Aorta (tissue), 5 donors: ENCODE measurements at regions of chr5 and their contacts with region 1.

Region 1: DNA sequence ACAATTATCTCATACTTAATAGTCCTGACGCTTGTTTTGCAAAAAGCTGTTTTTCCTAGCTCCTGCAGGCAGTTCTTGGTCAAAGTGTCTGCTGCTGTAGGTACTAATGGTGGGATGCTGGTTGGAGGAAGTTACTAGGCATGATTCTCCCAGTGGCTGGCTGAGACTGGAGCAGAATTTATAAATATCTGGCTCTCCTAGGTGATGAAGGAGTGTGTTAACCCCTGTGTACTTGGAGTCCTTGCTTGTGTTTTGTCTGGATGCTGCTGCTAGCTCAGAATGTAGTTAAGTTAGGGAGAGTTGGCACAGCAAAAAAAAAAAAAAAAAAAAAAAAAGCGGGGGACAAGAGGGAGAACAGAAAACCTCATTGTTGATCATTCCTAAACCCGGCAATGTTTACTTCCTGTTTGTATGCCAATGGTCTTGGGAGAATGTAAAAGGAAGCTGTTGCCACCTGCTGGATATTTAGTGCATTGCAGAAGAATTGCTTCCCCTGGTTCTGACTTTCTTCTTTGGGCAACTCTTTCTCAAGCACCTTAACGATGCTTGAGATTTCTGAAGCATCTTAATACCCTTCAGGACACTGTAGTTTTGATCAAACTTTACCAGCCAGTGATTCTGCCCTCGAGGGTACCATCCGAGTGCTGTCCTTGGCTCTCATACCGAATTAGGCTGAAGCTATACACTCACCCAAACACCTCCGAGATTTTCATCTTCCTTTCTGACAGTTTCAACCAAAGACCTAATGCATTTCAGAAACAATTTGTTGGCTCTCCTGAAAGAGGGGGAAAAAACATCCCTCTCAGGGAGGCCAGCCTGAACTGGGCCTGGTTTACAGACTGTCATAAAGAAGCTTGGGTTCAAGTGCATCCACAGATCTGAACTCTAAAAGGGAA is 71.7 kb upstream of the WWC1 start:
- DNase-seq: no peak
- ATAC-seq: peak; percentile 82
- H3K4me3 ChIP-seq: no peak overlapping the region
- H3K27ac ChIP-seq: no peak overlapping the region
- H3K4me1 ChIP-seq: no peaks in the 10 kb centered on the region
- H3K27me3 ChIP-seq: no peaks in the 10 kb centered on the region

Region 2: DNA sequence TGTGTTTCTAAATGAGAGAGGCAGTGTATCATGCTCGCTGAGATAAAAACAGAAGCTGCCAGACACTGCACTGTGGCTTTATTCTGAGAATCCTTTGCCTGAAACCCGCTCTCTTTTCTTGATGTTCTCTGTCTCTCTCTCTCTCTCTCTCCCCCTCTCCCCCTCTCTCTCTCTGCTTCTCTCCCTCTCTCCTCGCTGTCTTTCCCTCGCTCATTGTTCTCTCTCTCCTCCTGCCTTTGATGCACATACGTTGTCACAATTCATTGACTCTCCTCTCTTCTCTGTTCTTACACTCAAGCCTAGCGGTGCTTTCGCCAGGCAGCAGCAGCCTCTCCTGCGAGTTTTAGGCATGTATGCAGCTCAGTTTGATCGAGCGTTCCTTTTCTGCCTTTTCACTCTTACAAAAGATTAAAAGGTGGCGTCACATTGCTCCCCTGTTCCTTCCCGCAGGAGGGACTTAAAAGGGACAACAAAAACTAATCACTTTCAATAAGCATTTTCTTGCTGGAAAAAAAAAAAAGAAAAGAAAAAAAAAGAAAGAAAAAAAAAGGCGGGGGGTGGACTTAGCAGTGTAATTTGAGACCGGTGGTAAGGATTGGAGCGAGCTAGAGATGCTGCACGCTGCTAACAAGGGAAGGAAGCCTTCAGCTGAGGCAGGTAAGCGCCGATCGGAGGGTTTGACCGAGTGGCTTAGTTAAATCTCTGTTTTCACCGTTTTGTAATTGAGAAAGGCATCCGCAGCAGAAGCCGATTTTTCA is 646.2 kb before region 1 on chr5:
- intact Hi-C with region 1: loop called in 1 of 2 experiments (anchors 10 kb)
- DNase-seq: no peak
- ATAC-seq: peak; percentile 36
- H3K4me3 ChIP-seq: peak overlapping the region; percentile 34 to 41
- H3K27ac ChIP-seq: no peak overlapping the region
- H3K4me1 ChIP-seq: no peaks in the 10 kb centered on the region
- H3K27me3 ChIP-seq: peaks cover 0 to 2% of the 10 kb centered on the region in 2 donors

Region 3: DNA sequence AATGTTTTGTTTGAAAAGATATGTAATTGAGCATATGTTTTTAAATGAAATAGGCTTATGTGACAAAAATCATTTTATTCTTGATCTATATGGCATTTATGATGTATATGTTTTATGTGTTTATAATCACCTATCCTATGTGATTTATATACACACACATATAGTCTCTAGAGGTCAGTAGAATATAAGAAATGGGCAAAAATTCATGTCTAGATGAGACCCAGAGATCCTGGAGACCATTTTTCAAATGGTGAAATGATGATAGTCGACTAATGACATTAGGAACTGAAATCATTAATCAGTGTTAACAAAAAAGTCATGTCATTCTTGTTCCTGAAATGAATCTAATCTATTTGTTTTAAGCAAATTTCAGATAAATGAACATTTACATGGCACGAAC is 637.5 kb before region 1 on chr5:
- intact Hi-C with region 1: loop called (anchors 5 to 10 kb)
- DNase-seq: no peak
- ATAC-seq: no peak
- H3K4me3 ChIP-seq: no peak overlapping the region
- H3K27ac ChIP-seq: no peak overlapping the region
- H3K4me1 ChIP-seq: no peaks in the 10 kb centered on the region
- H3K27me3 ChIP-seq: no peaks in the 10 kb centered on the region

Region 4: GRCh38 chr5:168114444-168115017 is 105.2 kb before region 1 on chr5:
- intact Hi-C with region 1: loop called in 1 of 2 experiments (anchors 5 kb)
- DNase-seq: peak in 1 of 2 donors; percentile 50
- ATAC-seq: no peak
- H3K4me3 ChIP-seq: no peak overlapping the region
- H3K27ac ChIP-seq: no peak overlapping the region
- H3K4me1 ChIP-seq: no peaks in the 10 kb centered on the region
- H3K27me3 ChIP-seq: no peaks in the 10 kb centered on the region

Region 5: GRCh38 chr5:168268949-168269943 is 49.5 kb after region 1 on chr5:
- intact Hi-C with region 1: no loop called
- DNase-seq: peak; percentile 88 to 93
- ATAC-seq: peak; percentile 84
- H3K4me3 ChIP-seq: no peak overlapping the region
- H3K27ac ChIP-seq: no peak overlapping the region
- H3K4me1 ChIP-seq: no peaks in the 10 kb centered on the region
- H3K27me3 ChIP-seq: no peaks in the 10 kb centered on the region